Caco-2 (cell line): ENCODE measurements at regions of chr7 and their contacts with region 1.

Region 1: GRCh38 chr7:22110227-22110839 is 164.6 kb upstream of the CDCA7L start:
- DNase-seq: peak; percentile 75 to 78
- H3K4me3 ChIP-seq: no peak overlapping the region
- H3K4me3 Mint-ChIP-seq: no peak overlapping the region
- H3K27ac Mint-ChIP-seq: no peak overlapping the region
- H3K4me1 ChIP-seq: no peaks in the 10 kb centered on the region
- H3K4me1 Mint-ChIP-seq: no peaks in the 10 kb centered on the region
- H3K27me3 ChIP-seq: no peaks in the 10 kb centered on the region
- H3K27me3 Mint-ChIP-seq: peaks cover 3% of the 10 kb centered on the region
- CTCF ChIP-seq: peak; percentile 75

Region 2: GRCh38 chr7:22082886-22083703 is 27.2 kb before region 1 on chr7:
- CTCF ChIA-PET with region 1: interaction called, 17 read pairs
- POLR2A ChIA-PET with region 1: no interaction called
- intact Hi-C with region 1: no loop called
- DNase-seq: peak; percentile 85 to 96
- H3K4me3 ChIP-seq: peak overlapping the region; percentile 56
- H3K4me3 Mint-ChIP-seq: peak overlapping the region; percentile 81
- H3K27ac Mint-ChIP-seq: peak overlapping the region; percentile 40
- H3K4me1 ChIP-seq: no peaks in the 10 kb centered on the region
- H3K4me1 Mint-ChIP-seq: peaks cover 6% of the 10 kb centered on the region
- H3K27me3 ChIP-seq: no peaks in the 10 kb centered on the region
- H3K27me3 Mint-ChIP-seq: peaks cover 7% of the 10 kb centered on the region
- CTCF ChIP-seq: peak; percentile 94 to 95

Region 3: DNA sequence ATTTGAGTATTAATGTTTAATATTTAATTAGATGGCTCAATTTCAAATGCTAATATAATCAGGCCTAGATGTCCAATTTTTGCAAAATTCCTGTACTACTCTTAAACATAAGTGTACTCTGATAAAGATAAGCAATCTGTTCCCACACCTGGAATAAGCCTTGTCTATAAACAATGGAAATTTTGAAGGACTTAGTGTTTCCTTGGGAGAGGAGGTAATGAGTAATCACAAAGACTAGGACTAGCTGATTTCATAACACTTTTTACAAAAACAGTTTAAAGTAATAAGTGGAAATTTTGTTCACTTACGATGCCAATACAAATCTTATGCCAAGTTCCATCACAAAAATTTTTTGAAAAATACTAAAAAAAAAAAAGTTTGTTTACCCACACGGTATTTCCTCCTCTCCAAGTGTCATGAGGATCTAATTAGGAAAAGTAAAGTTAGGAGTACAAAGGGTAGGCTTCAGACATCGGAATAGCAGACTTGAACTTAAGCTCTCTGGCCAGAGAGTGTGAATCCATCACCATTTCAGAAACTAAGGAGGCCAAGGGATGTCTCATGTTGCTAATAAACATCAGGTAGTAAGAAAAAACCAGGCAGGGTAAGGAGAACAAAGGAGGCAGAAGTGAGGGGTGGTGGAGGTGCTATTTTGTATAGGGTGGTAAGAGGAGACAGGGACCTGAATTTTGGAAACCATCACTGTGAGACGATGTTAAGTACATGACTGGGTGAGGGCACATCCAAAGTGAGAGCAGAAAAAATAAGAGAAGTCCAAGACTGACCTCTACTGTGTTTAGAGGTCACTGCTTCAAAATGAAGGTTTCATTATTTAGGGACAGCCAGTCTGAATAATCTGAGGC is 185.3 kb after region 1 on chr7:
- CTCF ChIA-PET with region 1: interaction called, 6 read pairs
- POLR2A ChIA-PET with region 1: no interaction called
- intact Hi-C with region 1: loop called (anchors 1 kb)
- DNase-seq: no peak
- H3K4me3 ChIP-seq: no peak overlapping the region
- H3K4me3 Mint-ChIP-seq: no peak overlapping the region
- H3K27ac Mint-ChIP-seq: no peak overlapping the region
- H3K4me1 ChIP-seq: no peaks in the 10 kb centered on the region
- H3K4me1 Mint-ChIP-seq: no peaks in the 10 kb centered on the region
- H3K27me3 ChIP-seq: no peaks in the 10 kb centered on the region
- H3K27me3 Mint-ChIP-seq: no peaks in the 10 kb centered on the region
- CTCF ChIP-seq: no peak

Region 4: GRCh38 chr7:22488643-22489462 is 378.5 kb after region 1 on chr7:
- CTCF ChIA-PET with region 1: interaction called, 3 read pairs
- POLR2A ChIA-PET with region 1: no interaction called
- intact Hi-C with region 1: loop called (anchors 1 kb)
- DNase-seq: peak; percentile 67 to 80
- H3K4me3 ChIP-seq: no peak overlapping the region
- H3K4me3 Mint-ChIP-seq: no peak overlapping the region
- H3K27ac Mint-ChIP-seq: no peak overlapping the region
- H3K4me1 ChIP-seq: no peaks in the 10 kb centered on the region
- H3K4me1 Mint-ChIP-seq: no peaks in the 10 kb centered on the region
- H3K27me3 ChIP-seq: no peaks in the 10 kb centered on the region
- H3K27me3 Mint-ChIP-seq: no peaks in the 10 kb centered on the region
- CTCF ChIP-seq: peak; percentile 81 to 88

Region 5: GRCh38 chr7:22499044-22499443 is 388.7 kb after region 1 on chr7:
- CTCF ChIA-PET with region 1: no interaction called
- POLR2A ChIA-PET with region 1: no interaction called
- intact Hi-C with region 1: loop called (anchors 1 kb)
- DNase-seq: no peak
- H3K4me3 ChIP-seq: no peak overlapping the region
- H3K4me3 Mint-ChIP-seq: peak overlapping the region; percentile 72
- H3K27ac Mint-ChIP-seq: no peak overlapping the region
- H3K4me1 ChIP-seq: no peaks in the 10 kb centered on the region
- H3K4me1 Mint-ChIP-seq: no peaks in the 10 kb centered on the region
- H3K27me3 ChIP-seq: no peaks in the 10 kb centered on the region
- H3K27me3 Mint-ChIP-seq: peaks cover 4% of the 10 kb centered on the region
- CTCF ChIP-seq: no peak